Activated T-helper 1 cell treated with anti-CD3 and anti-CD28 coated beads, Interleukin-12 subunit alpha, Interleukin-12 subunit beta, Interleukin-2, Interleukin-4 antibody, amounts not matched to agents 30 ng/mL and 10 ng/mL and 1 ng/mL, durations not matched to agents 14 hours and 24 hours and 36 hours (primary cell): ENCODE measurements at regions of chr19 and their contacts with region 1.

Region 1: DNA sequence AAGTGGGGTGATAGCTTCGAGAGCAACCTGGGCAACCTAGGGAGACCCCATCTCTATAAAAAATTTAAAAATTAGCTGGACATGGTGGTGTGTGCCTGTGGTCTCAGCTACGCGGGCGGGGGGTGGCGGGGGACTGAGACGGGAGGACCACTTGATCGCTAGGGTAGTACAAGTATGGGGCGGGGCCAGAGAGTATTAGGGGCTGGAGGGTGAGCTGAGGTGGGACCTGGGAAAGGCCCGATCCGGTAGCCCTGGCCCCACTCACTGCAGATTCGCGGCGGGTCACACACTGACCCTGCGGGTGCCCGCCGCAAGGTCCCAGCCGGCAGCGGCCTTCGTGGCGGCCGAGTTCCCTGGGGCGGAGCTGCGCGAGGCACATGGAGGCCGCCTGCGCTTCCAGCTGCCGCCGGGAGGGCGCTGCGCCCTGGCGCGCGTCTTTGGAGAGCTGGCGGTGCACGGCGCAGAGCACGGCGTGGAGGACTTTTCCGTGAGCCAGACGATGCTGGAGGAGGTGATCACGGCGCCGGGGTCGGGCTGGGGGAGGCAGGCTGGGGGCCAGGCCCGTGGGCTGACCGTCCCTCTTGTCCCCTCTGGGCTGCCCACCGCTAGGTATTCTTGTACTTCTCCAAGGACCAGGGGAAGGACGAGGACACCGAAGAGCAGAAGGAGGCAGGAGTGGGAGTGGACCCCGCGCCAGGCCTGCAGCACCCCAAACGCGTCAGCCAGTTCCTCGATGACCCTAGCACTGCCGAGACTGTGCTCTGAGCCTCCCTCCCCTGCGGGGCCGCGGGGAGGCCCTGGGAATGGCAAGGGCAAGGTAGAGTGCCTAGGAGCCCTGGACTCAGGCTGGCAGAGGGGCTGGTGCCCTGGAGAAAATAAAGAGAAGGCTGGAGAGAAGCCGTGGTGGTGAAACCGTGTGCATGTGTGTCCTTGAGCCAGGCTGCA is 2.0 kb upstream of the ARHGAP45 start:
- DNase-seq: peak; percentile 72
- H3K4me3 Mint-ChIP-seq: peak overlapping the region; percentile 67
- H3K27ac Mint-ChIP-seq: peak overlapping the region; percentile 74
- H3K4me1 Mint-ChIP-seq: peaks cover 15% of the 10 kb centered on the region
- H3K27me3 Mint-ChIP-seq: no peaks in the 10 kb centered on the region

Region 2: DNA sequence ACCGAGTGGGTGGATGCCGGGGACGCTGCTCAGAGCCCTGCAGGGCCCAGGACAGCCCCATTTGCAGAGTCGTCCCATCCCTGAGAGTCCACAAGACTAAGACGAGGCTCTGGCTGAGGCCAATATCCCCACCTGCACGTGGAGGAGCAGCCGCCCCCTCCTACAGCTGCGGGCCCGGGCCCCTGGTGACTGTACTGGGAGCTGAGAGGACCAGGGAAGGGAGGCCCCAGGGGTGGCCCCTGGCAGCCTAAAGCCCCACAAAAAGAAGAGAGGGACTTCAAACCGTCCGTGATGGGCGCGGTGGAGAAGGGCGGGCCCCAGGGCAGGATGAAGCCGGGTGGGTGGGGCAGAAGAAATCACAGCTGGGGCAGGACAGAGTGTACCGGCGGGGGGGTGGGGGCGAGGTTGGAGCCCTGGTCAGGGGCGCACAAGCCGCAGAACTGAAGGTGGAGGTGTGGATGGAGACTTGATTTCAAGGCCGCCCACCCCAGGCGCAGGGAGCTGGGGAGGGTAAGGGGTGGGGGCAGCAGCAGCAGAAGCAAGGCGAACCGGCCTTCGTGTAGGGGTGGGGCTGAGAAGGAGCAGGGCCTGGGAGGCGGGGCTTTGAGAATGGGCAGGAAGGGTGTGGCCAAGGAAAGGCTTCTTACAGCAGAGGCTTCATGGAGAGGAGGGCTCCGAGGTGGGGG is 192.5 kb before region 1 on chr19:
- intact Hi-C with region 1: loop called (anchors 1 kb)
- DNase-seq: peak; percentile 84
- H3K4me3 Mint-ChIP-seq: peak overlapping the region; percentile 69
- H3K27ac Mint-ChIP-seq: peak overlapping the region; percentile 68
- H3K4me1 Mint-ChIP-seq: no peaks in the 10 kb centered on the region
- H3K27me3 Mint-ChIP-seq: no peaks in the 10 kb centered on the region

Region 3: DNA sequence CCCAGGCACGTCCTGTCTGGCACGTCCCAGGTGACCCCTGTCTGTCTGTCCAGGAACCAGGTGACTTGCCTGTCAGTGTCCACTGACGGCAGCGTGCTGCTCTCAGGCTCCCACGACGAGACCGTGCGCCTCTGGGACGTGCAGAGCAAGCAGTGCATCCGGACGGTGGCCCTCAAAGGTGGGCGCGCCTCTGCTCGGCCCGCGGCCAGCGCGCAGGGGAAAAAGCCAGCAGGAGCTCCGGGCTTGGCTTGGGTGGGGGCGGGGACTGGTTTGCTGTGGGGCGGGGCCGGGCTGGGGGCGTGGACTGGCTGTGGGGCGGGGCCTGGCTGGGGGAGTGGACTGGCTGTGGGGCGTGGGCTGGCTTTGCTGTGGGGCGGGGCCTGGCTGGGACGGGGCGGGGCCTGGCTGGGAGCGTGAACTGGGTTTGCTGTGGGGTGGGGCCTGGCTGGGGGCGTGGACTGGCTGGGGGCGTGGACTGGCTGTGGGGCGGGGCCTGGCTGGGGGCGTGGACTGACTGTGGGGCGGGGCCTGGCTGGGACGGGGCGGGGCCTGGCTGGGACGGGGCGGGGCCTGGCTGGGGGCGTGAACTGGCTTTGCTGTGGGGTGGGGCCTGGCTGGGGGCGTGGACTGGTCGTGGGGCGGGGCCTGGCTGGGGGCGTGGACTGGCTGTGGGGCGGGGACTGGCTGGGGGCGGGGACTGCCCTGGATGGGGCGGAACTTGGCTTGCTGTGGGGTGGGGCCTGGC is 73.6 kb before region 1 on chr19:
- intact Hi-C with region 1: loop called (anchors 1 kb)
- DNase-seq: peak; percentile 26
- H3K4me3 Mint-ChIP-seq: no peak overlapping the region
- H3K27ac Mint-ChIP-seq: no peak overlapping the region
- H3K4me1 Mint-ChIP-seq: no peaks in the 10 kb centered on the region
- H3K27me3 Mint-ChIP-seq: peaks cover 1% of the 10 kb centered on the region

Region 4: DNA sequence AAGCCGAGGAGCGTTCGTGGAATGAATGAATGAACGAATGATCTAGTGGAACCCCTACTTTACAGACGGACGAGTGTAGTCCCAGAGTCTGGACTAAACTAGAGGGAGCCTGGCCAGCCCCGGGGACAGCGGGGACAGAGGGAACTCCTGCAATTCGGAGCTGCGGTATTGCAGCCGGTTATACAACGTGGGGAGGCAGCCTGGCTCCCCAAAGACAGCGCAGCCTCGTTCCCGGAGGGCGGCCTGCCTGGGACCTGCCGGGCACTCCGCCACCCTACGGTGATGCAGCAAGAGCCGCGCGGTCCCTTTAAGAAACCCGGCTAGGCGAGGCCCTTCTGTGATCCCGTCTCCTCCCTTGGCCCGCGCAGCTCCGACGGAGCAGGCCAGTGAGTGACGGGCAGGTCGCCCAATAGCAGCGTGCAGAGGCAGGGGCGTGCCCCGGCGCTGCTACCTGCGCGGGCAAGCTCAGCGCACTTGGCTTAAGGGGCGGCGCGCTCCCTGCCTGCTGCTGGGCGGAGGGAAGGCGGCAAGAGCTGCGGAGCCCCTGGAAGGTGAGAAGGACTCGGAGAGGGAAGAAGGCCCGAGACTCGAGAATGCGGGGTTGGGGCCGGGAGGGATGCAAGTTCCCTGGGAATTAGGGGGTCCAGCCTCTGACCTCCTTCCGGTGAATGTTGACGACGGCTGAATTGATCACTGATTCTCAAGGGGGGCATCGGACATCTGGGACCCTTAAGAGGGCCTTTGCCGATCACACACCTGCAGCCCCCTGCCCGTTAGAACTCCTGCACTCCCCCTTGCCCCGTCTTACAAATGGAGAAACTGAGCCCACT is 25.1 kb before region 1 on chr19 and contains the start of gene ABCA7:
- intact Hi-C with region 1: loop called (anchors 1 kb)
- DNase-seq: peak; percentile 100
- H3K4me3 Mint-ChIP-seq: peak within 1 kb of the TSS; percentile 97
- H3K27ac Mint-ChIP-seq: peak within 1 kb of the TSS; percentile 86
- H3K4me1 Mint-ChIP-seq: peaks cover 51% of the 10 kb centered on the region
- H3K27me3 Mint-ChIP-seq: no peaks in the 10 kb centered on the region
- total RNA-seq, gene ABCA7: 15.8 and 18.3 TPM in 2 replicates

Region 5: GRCh38 chr19:1082172-1082927 is 17.4 kb after region 1 on chr19:
- intact Hi-C with region 1: loop called (anchors 1 kb)
- DNase-seq: peak; percentile 72
- H3K4me3 Mint-ChIP-seq: no peak overlapping the region
- H3K27ac Mint-ChIP-seq: peak overlapping the region; percentile 34
- H3K4me1 Mint-ChIP-seq: peaks cover 26% of the 10 kb centered on the region
- H3K27me3 Mint-ChIP-seq: no peaks in the 10 kb centered on the region

Region 6: DNA sequence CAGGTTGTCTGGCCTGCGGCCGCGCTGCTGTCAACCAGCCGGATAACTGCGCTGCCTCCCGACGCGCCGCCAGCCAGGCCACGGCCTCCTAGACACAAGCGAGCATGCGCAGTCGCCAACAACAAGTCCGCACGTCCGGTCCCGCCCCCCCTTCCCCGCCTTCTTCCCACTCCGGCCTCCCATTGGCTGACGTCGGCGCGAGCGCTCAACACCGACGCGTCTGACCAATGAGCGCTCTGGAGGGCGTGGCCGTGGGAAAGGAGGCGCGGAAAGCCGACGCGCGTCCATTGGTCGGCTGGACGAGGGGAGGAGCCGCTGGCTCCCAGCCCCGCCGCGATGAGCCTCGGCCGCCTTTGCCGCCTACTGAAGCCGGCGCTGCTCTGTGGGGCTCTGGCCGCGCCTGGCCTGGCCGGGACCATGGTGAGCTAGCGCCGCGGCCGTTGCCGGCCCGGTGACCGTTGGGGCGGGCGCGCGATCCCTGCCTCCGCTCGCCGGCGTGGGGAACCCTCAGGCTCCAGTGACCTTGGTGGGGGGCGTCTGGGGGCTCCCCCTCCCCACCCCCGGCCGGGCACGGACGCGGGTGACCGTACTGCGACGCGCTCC is 38.9 kb after region 1 on chr19 and contains the start of gene GPX4:
- intact Hi-C with region 1: loop called (anchors 5 kb)
- DNase-seq: peak; percentile 96
- H3K4me3 Mint-ChIP-seq: peak within 1 kb of the TSS; percentile 80
- H3K27ac Mint-ChIP-seq: peak within 1 kb of the TSS; percentile 90
- H3K4me1 Mint-ChIP-seq: peaks cover 30% of the 10 kb centered on the region
- H3K27me3 Mint-ChIP-seq: peaks cover 2% of the 10 kb centered on the region
- total RNA-seq, gene GPX4: 236 and 241 TPM in 2 replicates